CD8-positive, alpha-beta memory T cell (primary cell): ENCODE measurements at regions of chr1 and their contacts with region 1.

Region 1: DNA sequence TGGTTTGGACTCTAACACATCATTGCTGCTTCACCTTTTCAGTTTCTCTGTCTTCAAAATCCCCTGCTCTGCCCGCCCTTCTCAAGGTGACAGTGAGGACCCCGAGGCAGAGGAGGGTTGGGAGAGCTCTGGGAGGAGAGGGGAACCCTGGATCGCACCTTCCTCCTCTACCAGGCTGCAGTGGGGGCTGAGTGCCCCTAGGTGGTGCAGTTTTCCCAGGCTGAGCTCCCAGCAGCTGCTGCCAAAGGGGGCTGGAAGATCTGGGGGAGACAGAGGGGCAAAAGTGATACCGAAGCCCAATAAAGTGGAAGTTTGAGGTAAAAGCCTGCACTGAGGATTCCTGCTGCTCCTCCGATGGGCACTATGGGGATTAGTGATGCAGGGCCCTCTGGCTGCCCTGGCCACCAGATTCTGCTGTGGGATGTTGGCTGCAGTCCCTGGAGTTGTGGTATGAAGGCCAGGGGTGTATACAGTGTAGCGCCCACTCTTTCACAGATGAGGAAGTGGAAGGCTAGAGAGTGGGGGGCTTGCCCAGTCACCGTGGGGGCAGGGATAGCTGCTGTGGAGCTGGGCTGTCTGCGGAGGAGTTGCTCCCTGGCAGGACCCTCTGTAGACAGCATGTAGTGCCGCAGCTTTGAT is 40.7 kb upstream of the SCMH1 start:
- DNase-seq: peak in 1 of 5 donors; percentile 6
- H3K4me3 ChIP-seq: no peak overlapping the region
- H3K4me3 Mint-ChIP-seq: no peak overlapping the region
- H3K27ac ChIP-seq: no peak overlapping the region
- H3K27ac Mint-ChIP-seq: no peak overlapping the region
- H3K4me1 ChIP-seq: no peaks in the 10 kb centered on the region
- H3K4me1 Mint-ChIP-seq: no peaks in the 10 kb centered on the region
- H3K27me3 ChIP-seq: peaks cover 9% of the 10 kb centered on the region
- H3K27me3 Mint-ChIP-seq: peaks cover 19 to 63% of the 10 kb centered on the region in 2 donors

Region 2: GRCh38 chr1:41313661-41314131 is 30.9 kb after region 1 on chr1:
- CTCF ChIA-PET with region 1: no interaction called
- POLR2A ChIA-PET with region 1: no interaction called
- DNase-seq: peak in 1 of 5 donors; percentile 8
- H3K4me3 ChIP-seq: no peak overlapping the region
- H3K4me3 Mint-ChIP-seq: no peak overlapping the region
- H3K27ac ChIP-seq: no peak overlapping the region
- H3K27ac Mint-ChIP-seq: no peak overlapping the region
- H3K4me1 ChIP-seq: no peaks in the 10 kb centered on the region
- H3K4me1 Mint-ChIP-seq: peaks cover 0 to 6% (median 4%) of the 10 kb centered on the region in 3 donors
- H3K27me3 ChIP-seq: no peaks in the 10 kb centered on the region
- H3K27me3 Mint-ChIP-seq: peaks cover 0 to 8% of the 10 kb centered on the region in 2 donors

Region 3: DNA sequence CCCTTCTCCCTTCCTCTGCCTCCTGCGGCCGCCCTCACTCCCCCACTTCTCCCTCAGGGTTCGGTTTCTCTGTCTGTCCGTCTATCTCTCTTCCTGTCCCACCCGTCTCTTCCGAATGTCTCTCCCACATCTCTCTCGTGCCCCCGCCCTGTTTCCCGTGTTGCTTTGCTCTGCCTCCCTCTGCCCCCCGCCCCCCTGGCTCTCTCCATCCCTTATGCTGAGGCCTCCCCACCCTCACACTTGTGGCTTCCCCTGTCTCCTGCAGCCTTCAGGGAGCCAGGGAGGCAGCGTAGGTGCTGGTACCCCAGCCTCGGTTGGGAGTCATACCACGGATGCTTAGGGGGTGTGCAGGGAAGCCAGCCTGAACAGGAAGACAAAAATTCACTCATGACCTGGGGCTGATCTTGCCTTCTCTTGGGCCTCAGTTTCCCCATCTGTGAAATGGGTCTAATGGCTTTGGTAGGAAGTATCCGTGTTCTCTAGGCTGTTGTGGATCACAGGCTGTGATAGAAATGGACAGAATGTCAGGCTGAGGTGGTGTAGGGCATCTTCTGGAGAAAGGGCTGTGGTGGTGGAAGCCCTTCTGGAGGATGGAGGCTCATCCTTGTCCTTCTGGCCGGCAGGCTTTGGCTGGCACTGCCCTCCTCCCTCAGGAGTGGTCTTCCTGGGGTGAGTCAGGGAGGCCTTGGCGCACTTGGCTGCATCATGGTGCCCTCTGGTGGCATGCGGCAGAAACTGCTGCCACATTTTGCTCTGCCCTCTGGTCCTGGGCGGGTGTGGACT is 133.9 kb after region 1 on chr1:
- CTCF ChIA-PET with region 1: interaction called, 26 read pairs
- POLR2A ChIA-PET with region 1: no interaction called
- DNase-seq: peak; percentile 39 to 73 (median 43)
- H3K4me3 ChIP-seq: no peak overlapping the region
- H3K4me3 Mint-ChIP-seq: no peak overlapping the region
- H3K27ac ChIP-seq: no peak overlapping the region
- H3K27ac Mint-ChIP-seq: peak overlapping the region in 1 of 8 donors; percentile 66
- H3K4me1 ChIP-seq: no peaks in the 10 kb centered on the region
- H3K4me1 Mint-ChIP-seq: no peaks in the 10 kb centered on the region
- H3K27me3 ChIP-seq: no peaks in the 10 kb centered on the region
- H3K27me3 Mint-ChIP-seq: peaks cover 20 to 24% of the 10 kb centered on the region in 2 donors

Region 4: GRCh38 chr1:41432481-41433280 is 149.9 kb after region 1 on chr1:
- CTCF ChIA-PET with region 1: interaction called, 11 read pairs
- POLR2A ChIA-PET with region 1: no interaction called
- DNase-seq: peak; percentile 28 to 71 (median 41)
- H3K4me3 ChIP-seq: no peak overlapping the region
- H3K4me3 Mint-ChIP-seq: no peak overlapping the region
- H3K27ac ChIP-seq: no peak overlapping the region
- H3K27ac Mint-ChIP-seq: no peak overlapping the region
- H3K4me1 ChIP-seq: no peaks in the 10 kb centered on the region
- H3K4me1 Mint-ChIP-seq: no peaks in the 10 kb centered on the region
- H3K27me3 ChIP-seq: no peaks in the 10 kb centered on the region
- H3K27me3 Mint-ChIP-seq: peaks cover 16 to 63% of the 10 kb centered on the region in 2 donors

Region 5: GRCh38 chr1:41474490-41475271 is 191.9 kb after region 1 on chr1:
- CTCF ChIA-PET with region 1: no interaction called
- POLR2A ChIA-PET with region 1: no interaction called
- DNase-seq: peak in 1 of 5 donors; percentile 19
- H3K4me3 ChIP-seq: no peak overlapping the region
- H3K4me3 Mint-ChIP-seq: no peak overlapping the region
- H3K27ac ChIP-seq: no peak overlapping the region
- H3K27ac Mint-ChIP-seq: peak overlapping the region in 1 of 8 donors; percentile 84
- H3K4me1 ChIP-seq: no peaks in the 10 kb centered on the region
- H3K4me1 Mint-ChIP-seq: no peaks in the 10 kb centered on the region
- H3K27me3 ChIP-seq: no peaks in the 10 kb centered on the region
- H3K27me3 Mint-ChIP-seq: no peaks in the 10 kb centered on the region